ENCODE measurements at regions of chr7 and their contacts with region 1.

Region 1: GRCh38 chr7:37181550-37181932 is 267.1 kb downstream of the ELMO1 start:
- DNase-seq: no peak
- ATAC-seq: no peak
- H3K4me3 ChIP-seq: no peak overlapping the region
- H3K27ac ChIP-seq: no peak overlapping the region
- H3K4me1 ChIP-seq: no peaks in the 10 kb centered on the region
- CTCF ChIP-seq: no peak
- EP300 ChIP-seq: no peak
- POLR2A ChIP-seq: no peak
- RAD21 ChIP-seq: no peak

Region 2: DNA sequence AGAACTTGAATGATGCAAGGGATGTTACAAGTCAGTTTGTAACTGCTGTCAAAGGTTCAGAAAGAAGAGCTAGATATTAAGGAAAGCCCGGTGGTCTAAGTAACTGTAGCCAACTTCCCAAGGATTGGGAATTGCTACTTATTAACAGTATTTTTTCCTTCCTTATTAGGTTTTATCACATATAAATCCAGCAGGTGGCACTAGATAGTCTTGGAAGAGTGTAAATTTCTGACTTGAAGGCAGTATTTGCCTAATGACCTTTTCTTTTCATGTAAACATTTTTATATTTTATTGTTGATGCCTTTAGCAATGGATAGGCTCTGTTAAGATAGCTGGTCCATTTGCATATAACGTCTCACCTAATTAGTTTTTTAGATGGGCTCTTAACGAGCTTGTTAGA is 740.7 kb before region 1 on chr7:
- CTCF ChIA-PET with region 1: interaction called, 29 read pairs
- POLR2A ChIA-PET with region 1: no interaction called
- DNase-seq: peak; percentile 37 to 41
- ATAC-seq: peak; percentile 76 to 81; a peak in 4 of 6 replicates
- H3K4me3 ChIP-seq: no peak overlapping the region
- H3K27ac ChIP-seq: no peak overlapping the region
- H3K4me1 ChIP-seq: no peaks in the 10 kb centered on the region
- CTCF ChIP-seq: peak; percentile 74
- EP300 ChIP-seq: no peak
- POLR2A ChIP-seq: no peak
- RAD21 ChIP-seq: peak; percentile 42 to 65; a peak in 4 of 5 replicates

Region 3: DNA sequence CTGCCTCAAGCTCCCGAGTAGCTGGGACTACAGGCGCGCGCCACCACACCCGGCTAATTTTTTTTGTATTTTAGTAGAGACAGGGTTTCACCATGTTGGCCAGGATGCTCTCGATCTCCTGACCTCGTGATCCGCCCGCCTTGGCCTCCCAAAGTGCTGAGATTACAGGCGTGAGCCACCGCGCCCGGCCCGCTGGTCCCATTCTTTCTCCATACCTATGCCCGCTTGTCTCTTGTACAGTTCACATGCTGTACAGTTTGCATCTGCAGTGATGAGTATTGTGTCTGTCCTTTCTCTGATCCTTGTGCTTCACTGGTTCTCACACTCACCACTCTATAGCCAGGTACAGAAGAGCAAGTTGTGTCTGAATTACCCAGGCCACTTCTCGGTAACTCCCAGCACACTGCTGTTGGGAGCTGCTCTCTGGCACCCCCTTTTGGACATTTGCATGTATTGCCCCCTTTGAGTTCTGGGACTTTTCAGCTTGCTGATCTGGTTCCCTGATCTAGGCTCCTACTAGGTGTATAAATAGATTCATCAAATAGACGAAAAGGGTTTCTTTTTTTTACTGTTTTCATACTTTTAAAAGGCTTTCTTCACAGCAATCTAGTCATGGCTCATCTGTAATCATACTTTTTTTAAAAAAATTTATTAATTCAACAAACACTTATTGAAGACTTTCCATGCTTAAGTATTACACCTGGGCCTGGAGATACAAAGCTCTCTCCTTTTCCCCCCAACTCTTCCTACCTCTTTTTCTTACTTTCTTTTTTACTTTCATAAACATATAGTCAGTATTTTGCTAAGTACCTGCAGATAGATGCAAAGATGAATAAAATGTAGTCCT is 510.7 kb before region 1 on chr7:
- CTCF ChIA-PET with region 1: interaction called, 13 read pairs
- POLR2A ChIA-PET with region 1: no interaction called
- DNase-seq: peak; percentile 56 to 64
- ATAC-seq: peak; percentile 88 to 96
- H3K4me3 ChIP-seq: no peak overlapping the region
- H3K27ac ChIP-seq: no peak overlapping the region
- H3K4me1 ChIP-seq: 0 out of 3 replicates have a peak, but pooled peaks cover 6% of the 10 kb centered on the region
- CTCF ChIP-seq: peak; percentile 84
- EP300 ChIP-seq: no peak
- POLR2A ChIP-seq: no peak
- RAD21 ChIP-seq: peak; percentile 86 to 93

Region 4: DNA sequence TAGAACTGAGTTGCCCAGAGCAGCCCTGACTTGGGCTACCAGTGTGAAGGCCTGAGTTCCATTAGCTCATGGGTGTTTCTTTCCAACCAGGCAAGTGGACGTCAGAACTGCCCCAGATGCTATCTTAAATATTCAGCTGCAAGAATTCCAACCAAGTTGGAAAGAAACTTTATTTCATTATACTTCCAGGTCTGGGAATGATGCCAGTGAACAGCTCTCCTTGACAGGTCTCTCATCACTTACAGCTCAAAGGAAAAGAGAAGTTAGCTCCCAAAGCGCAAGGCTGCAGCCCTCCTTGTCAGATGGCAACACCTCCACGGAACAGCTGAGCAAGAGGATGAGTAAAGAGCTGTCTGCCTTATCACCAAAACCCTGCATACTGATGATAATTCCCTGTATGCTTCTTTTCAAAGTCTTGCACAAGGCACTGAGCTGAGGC is 201.7 kb before region 1 on chr7:
- CTCF ChIA-PET with region 1: interaction called, 143 read pairs
- POLR2A ChIA-PET with region 1: no interaction called
- DNase-seq: no peak
- ATAC-seq: no peak
- H3K4me3 ChIP-seq: no peak overlapping the region
- H3K27ac ChIP-seq: no peak overlapping the region
- H3K4me1 ChIP-seq: no peaks in the 10 kb centered on the region
- CTCF ChIP-seq: no peak
- EP300 ChIP-seq: no peak
- POLR2A ChIP-seq: no peak
- RAD21 ChIP-seq: no peak

Region 5: GRCh38 chr7:37016064-37016878 is 165.3 kb before region 1 on chr7:
- CTCF ChIA-PET with region 1: interaction called, 11 read pairs
- POLR2A ChIA-PET with region 1: no interaction called
- DNase-seq: peak in 1 of 2 experiments; percentile 16
- ATAC-seq: no peak
- H3K4me3 ChIP-seq: no peak overlapping the region
- H3K27ac ChIP-seq: no peak overlapping the region
- H3K4me1 ChIP-seq: no peaks in the 10 kb centered on the region
- CTCF ChIP-seq: no peak
- EP300 ChIP-seq: no peak
- POLR2A ChIP-seq: no peak
- RAD21 ChIP-seq: no peak

Region 6: DNA sequence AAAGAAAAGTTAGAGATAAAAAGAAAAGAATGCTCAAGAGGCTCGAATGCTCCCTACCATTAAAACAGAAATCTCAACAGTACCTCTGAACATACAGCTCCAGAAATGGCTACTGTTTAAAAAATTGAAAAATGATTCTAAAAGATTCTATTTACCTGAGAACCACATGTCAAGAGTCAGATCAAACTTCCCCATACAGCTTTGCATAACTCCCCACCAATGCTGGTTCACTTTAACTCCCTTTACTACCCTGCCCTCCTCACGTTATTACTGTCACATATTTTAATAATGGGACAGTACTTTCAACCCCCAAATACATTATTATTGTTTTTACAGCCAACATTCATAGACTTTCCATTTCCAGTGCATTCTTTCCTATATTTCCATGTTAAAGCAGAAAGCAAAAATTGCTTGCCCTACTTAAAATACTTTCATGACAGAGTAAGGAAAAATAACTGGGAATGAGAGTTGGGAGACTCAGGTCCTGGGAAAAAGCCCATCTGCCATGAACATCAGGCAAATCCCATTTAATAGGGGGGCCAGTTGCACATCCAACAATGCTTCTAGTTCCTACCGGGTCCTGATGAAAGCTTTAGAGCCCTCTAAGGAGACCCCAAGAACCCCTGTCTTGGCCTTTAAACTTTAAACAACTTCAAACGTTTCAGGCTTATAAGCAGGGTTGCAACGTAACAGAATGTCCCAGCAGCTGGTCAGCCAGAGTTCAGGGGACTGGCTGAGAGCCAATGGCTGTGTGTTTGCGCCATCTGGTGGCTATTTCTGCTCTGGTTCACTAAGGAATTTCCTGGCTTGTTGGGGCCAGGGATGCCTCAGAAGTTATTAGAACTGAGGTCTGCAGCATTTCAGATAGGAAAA is 19.7 kb after region 1 on chr7:
- CTCF ChIA-PET with region 1: interaction called, 17 read pairs
- POLR2A ChIA-PET with region 1: no interaction called
- DNase-seq: peak; percentile 70 to 84
- ATAC-seq: peak; percentile 85 to 92
- H3K4me3 ChIP-seq: no peak overlapping the region
- H3K27ac ChIP-seq: peak overlapping the region in 1 of 2 experiments; percentile 31; a peak in 1 of 6 replicates
- H3K4me1 ChIP-seq: peaks cover 5% of the 10 kb centered on the region; the same call in 1 of the 3 replicates
- CTCF ChIP-seq: peak; percentile 84
- EP300 ChIP-seq: no peak
- POLR2A ChIP-seq: no peak
- RAD21 ChIP-seq: peak; percentile 76 to 79

Measured in A549 (cell line).